Activated CD8-positive, alpha-beta T cell treated with anti-CD3 and anti-CD28 coated beads for 36 hours (primary cell): ENCODE measurements at regions of chr4 and their contacts with region 1.

Region 1: DNA sequence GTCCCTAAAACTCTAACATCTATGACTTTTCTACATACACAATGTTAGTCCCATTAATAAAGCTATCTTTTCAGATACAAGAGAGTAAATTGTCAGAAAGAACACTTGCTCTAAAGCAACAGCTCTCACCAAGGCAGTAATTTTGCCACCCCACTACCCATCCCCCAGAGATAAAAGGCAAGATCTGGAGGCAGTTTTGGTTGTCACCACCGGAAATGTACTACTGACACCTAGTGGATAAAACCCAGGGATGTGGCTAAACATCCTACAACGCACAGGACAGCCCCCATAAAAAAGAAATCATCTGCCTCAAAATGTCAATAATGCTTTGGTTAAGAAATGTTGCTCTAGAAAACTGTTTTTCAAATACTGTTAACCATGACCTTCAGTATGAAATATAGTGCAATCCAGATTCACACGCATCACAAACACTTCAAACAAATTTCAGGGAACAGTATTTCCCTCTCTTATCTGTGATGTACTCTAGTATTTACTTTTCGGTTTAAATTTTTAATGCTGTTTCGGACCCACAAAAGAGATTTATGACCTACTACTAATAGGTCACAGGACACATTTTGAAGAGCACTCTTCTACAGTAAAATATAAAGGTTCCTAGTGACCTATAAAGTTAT is 5.1 kb downstream of the FBXL5 start:
- DNase-seq: peak; percentile 77
- ATAC-seq: peak; percentile 81
- H3K4me3 Mint-ChIP-seq: peak overlapping the region; percentile 50
- H3K27ac Mint-ChIP-seq: peak overlapping the region; percentile 85
- H3K4me1 Mint-ChIP-seq: peaks cover 59% of the 10 kb centered on the region
- H3K27me3 Mint-ChIP-seq: no peaks in the 10 kb centered on the region
- CTCF ChIP-seq: peak; percentile 72

Region 2: GRCh38 chr4:15231265-15232091 is 418.6 kb before region 1 on chr4:
- CTCF ChIA-PET with region 1: interaction called, 9 read pairs
- POLR2A ChIA-PET with region 1: no interaction called
- intact Hi-C with region 1: loop called (anchors 5 kb)
- DNase-seq: peak; percentile 87
- ATAC-seq: peak; percentile 69
- H3K4me3 Mint-ChIP-seq: no peak overlapping the region
- H3K27ac Mint-ChIP-seq: no peak overlapping the region
- H3K4me1 Mint-ChIP-seq: peaks cover 33% of the 10 kb centered on the region
- H3K27me3 Mint-ChIP-seq: no peaks in the 10 kb centered on the region
- CTCF ChIP-seq: peak; percentile 90